Caco-2 (cell line): ENCODE measurements at regions of chr1 and their contacts with region 1.

Region 1: DNA sequence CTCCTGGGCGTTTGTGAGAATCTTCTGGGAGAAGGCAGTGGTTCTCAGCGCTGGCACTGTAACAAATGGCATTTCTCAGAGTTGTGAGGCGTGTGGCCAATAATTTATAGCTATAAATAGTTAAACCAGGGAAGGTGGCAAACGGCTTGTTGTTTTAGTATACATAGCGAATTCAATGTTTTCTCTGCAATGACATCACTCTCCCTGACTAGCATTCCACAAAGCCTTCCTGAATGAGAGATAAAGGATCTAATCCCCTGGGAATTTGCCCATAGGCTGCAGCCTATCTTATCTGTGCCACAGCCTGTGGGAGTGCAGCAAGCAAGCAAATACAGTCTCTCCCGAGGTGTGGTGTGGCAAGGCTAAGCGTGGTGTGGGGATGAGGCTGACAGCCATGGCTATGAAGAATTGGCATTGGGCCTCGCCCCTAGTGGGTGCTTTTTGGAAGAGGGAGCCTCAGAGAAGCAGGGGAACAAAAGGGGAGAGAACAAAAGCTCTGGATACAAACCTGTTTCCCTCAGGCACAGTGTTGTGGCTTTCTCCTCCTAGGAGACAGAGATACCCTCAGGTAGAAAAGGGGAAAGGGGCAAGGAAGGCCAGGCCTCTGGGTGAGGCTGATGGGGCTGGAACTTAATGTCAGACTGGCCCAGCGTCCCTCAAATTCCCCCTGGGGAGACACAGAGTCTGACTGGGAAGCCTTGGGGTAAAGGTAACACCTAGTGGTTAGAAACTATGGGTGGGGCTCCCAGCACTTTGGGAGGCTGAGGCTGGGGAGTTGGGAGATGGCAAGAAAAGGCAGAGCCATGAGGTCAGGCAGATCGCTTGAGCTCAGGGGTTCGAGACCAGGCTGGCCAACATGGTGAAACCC is 8.9 kb downstream of the TAGLN2 start:
- DNase-seq: peak; percentile 90 to 94
- H3K4me3 ChIP-seq: no peak overlapping the region
- H3K4me3 Mint-ChIP-seq: peak overlapping the region; percentile 45
- H3K27ac Mint-ChIP-seq: peak overlapping the region; percentile 88
- H3K4me1 ChIP-seq: peaks cover 84% of the 10 kb centered on the region
- H3K4me1 Mint-ChIP-seq: peaks cover 67% of the 10 kb centered on the region
- H3K27me3 ChIP-seq: no peaks in the 10 kb centered on the region
- H3K27me3 Mint-ChIP-seq: no peaks in the 10 kb centered on the region
- CTCF ChIP-seq: no peak

Region 2: GRCh38 chr1:159851407-159851806 is 65.0 kb before region 1 on chr1:
- CTCF ChIA-PET with region 1: no interaction called
- POLR2A ChIA-PET with region 1: no interaction called
- intact Hi-C with region 1: no loop called
- DNase-seq: no peak
- H3K4me3 ChIP-seq: no peak overlapping the region
- H3K4me3 Mint-ChIP-seq: no peak overlapping the region
- H3K27ac Mint-ChIP-seq: no peak overlapping the region
- H3K4me1 ChIP-seq: peaks cover 4% of the 10 kb centered on the region
- H3K4me1 Mint-ChIP-seq: peaks cover 17% of the 10 kb centered on the region
- H3K27me3 ChIP-seq: no peaks in the 10 kb centered on the region; the same call in 1 of the 2 replicates
- H3K27me3 Mint-ChIP-seq: peaks cover 5% of the 10 kb centered on the region
- CTCF ChIP-seq: no peak

Region 3: DNA sequence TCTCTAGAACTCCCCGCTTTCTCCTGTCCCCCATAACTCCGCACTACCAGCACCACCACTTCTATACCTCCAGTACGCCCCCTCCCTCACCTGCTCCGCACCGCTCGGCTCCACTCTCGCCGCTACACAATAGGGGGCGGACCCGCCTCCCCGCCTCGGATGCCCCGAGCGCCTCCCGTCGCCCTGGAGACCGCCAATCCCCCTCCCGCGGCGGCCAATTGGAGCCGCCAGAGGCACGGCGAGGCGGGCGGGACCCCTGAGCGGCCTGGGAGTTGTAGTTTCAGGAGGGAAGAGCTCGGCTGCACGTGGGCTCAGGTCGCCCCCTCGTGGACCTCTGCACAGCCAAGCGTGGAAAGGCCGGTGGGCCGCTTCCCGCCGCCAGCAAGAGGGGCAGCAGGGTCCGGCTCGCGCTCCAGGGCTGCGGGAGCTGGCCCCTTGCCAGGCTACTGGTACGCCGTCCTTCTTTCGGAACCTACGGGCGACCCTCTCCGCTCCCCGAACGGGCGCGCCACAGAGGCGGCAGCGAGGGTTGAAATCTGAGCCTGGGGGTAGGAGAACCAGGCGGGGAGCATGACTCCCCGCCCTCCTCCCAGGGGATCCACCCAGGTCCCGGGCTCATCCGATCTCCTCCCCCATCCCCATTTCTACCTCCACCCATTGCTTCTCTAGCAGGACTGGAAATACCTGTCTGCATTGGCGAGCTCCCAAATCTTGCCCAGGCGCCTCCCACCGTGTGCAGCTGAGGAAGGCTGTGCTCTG is 29.2 kb after region 1 on chr1 and contains the start of gene IGSF9:
- CTCF ChIA-PET with region 1: no interaction called
- POLR2A ChIA-PET with region 1: no interaction called
- intact Hi-C with region 1: loop called (anchors 1 kb)
- DNase-seq: peak; percentile 95 to 97
- H3K4me3 ChIP-seq: peak within 1 kb of the TSS; percentile 50
- H3K4me3 Mint-ChIP-seq: peak within 1 kb of the TSS; percentile 83
- H3K27ac Mint-ChIP-seq: peak within 1 kb of the TSS; percentile 68
- H3K4me1 ChIP-seq: peaks cover 56% of the 10 kb centered on the region
- H3K4me1 Mint-ChIP-seq: peaks cover 61% of the 10 kb centered on the region
- H3K27me3 ChIP-seq: no peaks in the 10 kb centered on the region
- H3K27me3 Mint-ChIP-seq: no peaks in the 10 kb centered on the region
- CTCF ChIP-seq: peak; percentile 74 to 80
- total RNA-seq, gene IGSF9: 19.6 and 21.2 TPM in 2 replicates